ENCODE measurements at regions of chr9 and their contacts with region 1.

Region 1: GRCh38 chr9:130331573-130331972 is 66.0 kb downstream of the HMCN2 start:
- DNase-seq: peak; percentile 74
- ATAC-seq: peak; percentile 71
- H3K4me3 ChIP-seq: no peak overlapping the region
- H3K27ac ChIP-seq: no peak overlapping the region
- H3K4me1 ChIP-seq: peaks cover 16% of the 10 kb centered on the region
- H3K27me3 ChIP-seq: peaks cover 50% of the 10 kb centered on the region
- CTCF ChIP-seq: no peak
- POLR2A ChIP-seq: no peak
- RAD21 ChIP-seq: no peak

Region 2: DNA sequence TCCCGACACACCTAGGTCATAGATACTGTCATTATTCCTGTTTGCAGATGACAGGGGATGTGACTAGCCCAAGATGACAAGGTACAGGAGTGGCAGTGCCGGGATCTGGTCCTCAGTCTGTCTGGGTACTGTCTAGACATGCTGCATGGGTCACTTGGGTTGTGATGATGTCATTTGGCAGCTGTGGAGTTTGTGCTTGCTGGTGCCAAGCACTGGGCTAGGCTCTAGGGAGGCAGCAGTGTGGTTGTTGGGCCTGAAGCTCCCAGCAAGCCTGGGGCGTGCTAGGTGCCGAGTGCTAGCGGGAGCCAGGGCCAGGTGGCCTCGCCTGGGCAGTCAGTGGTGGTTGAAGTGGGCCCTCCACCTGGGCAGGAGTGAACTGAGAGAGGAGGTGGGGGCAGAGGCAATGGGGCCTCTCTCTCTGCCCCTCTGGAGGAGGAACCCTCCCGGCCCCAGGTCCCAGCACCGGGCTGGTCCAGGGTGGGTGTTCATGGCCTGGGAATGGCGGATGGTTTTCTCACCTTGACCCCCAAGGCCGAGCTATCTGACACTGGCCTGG is 680.8 kb before region 1 on chr9:
- CTCF ChIA-PET with region 1: no interaction called
- POLR2A ChIA-PET with region 1: no interaction called
- dilution Hi-C with region 1: no loop called
- in situ Hi-C with region 1: no loop called
- intact Hi-C with region 1: no loop called
- DNase-seq: no peak
- ATAC-seq: no peak
- H3K4me3 ChIP-seq: no peak overlapping the region
- H3K27ac ChIP-seq: no peak overlapping the region
- H3K4me1 ChIP-seq: peaks cover 15% of the 10 kb centered on the region; the same call in 1 of the 2 replicates
- H3K27me3 ChIP-seq: no peaks in the 10 kb centered on the region
- CTCF ChIP-seq: no peak
- POLR2A ChIP-seq: no peak
- RAD21 ChIP-seq: no peak

Region 3: GRCh38 chr9:130275771-130276520 is 55.6 kb before region 1 on chr9:
- CTCF ChIA-PET with region 1: no interaction called
- POLR2A ChIA-PET with region 1: no interaction called
- dilution Hi-C with region 1: no loop called
- in situ Hi-C with region 1: no loop called
- intact Hi-C with region 1: loop called (anchors 10 kb)
- DNase-seq: peak; percentile 81
- ATAC-seq: peak; percentile 82
- H3K4me3 ChIP-seq: no peak overlapping the region
- H3K27ac ChIP-seq: no peak overlapping the region
- H3K4me1 ChIP-seq: peaks cover 2% of the 10 kb centered on the region; the same call in 1 of the 2 replicates
- H3K27me3 ChIP-seq: peaks cover 17% of the 10 kb centered on the region
- CTCF ChIP-seq: no peak
- POLR2A ChIP-seq: no peak
- RAD21 ChIP-seq: no peak

Measured in IMR-90 (cell line).